Activated CD4-positive, alpha-beta T cell treated with anti-CD3 and anti-CD28 coated beads for 36 hours (primary cell): ENCODE measurements at regions of chr6 and their contacts with region 1.

Region 1: DNA sequence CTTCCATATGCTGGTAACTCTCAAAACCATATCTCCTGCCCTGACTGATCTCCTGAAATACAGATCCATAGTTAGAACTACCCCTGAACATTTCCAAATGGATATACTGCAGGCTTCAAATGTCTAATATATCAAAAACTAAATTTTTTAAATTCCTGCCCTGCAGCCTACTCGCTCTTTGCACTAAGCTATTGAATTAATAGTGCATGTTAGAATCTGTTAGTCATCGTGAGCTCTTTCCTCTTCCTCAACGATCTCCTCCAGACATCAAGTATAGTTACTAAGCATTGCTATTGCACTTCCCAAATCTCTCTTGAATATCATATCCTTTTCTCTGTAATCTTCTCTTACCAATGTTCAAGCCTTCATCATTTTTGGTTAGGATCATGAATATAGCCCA is 26.0 kb upstream of the RSPO3 start:
- DNase-seq: no peak
- ATAC-seq: no peak
- H3K4me3 Mint-ChIP-seq: no peak overlapping the region
- H3K27ac Mint-ChIP-seq: no peak overlapping the region
- H3K4me1 Mint-ChIP-seq: no peaks in the 10 kb centered on the region
- H3K27me3 Mint-ChIP-seq: no peaks in the 10 kb centered on the region

Region 2: GRCh38 chr6:127022302-127022701 is 70.2 kb before region 1 on chr6:
- CTCF ChIA-PET with region 1: no interaction called
- POLR2A ChIA-PET with region 1: no interaction called
- intact Hi-C with region 1: no loop called
- DNase-seq: no peak
- ATAC-seq: no peak
- H3K4me3 Mint-ChIP-seq: no peak overlapping the region
- H3K27ac Mint-ChIP-seq: no peak overlapping the region
- H3K4me1 Mint-ChIP-seq: no peaks in the 10 kb centered on the region
- H3K27me3 Mint-ChIP-seq: no peaks in the 10 kb centered on the region

Region 3: DNA sequence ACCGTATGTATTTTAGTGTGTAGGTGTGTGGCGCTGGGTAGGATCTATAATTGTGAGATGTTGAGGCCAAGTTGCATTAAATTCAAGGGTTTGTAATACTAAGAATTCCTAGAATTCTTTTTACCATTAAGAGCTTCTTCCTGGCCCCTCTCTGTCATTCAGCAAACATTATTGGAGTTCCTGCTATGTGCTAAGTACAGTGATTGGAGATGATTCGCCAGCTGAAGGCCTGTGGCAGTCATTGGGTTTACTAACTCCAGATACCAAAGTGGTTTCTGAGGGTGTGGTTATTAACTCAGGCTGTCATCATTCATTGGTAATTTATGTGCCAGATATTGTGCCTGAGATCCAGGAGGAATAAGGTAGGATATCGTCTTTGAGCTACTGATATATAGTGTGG is 1957.6 kb after region 1 on chr6:
- CTCF ChIA-PET with region 1: no interaction called
- POLR2A ChIA-PET with region 1: no interaction called
- intact Hi-C with region 1: loop called in 1 of 2 experiments (anchors 10 kb)
- DNase-seq: no peak
- ATAC-seq: no peak
- H3K4me3 Mint-ChIP-seq: no peak overlapping the region
- H3K27ac Mint-ChIP-seq: no peak overlapping the region
- H3K4me1 Mint-ChIP-seq: no peaks in the 10 kb centered on the region
- H3K27me3 Mint-ChIP-seq: peaks cover 13% of the 10 kb centered on the region